CD4-positive, alpha-beta memory T cell (primary cell): ENCODE measurements at regions of chr3 and their contacts with region 1.

Region 1: DNA sequence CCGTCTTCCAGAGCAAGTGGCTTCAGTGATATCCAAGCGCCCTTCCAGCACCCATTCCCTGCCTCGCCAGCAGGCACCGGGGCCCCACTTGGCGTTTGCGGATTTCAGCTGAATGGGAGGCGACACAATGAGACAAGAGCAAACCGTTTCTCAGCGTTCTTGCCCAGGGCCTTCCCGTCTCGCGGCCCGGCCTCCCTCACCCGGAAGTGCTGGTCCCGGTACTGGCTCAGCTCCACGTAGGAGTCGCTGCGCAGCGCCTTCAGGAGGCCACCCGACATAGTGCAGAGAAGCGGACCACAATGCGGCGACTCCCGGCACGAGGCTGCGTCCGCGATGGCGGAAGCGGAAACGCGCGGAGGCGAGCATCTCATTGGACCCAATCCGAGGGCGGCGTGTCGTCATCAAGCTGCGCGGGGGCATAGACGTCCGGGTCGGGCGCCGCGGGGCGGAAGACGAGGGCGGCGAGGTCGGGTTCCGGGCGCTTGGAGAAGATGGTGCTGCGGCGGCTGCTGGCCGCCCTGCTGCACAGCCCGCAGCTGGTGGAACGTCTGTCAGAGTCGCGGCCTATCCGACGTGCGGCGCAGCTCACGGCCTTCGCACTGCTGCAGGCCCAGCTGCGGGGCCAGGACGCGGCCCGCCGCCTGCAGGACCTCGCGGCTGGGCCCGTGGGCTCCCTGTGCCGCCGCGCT is at the start of gene NCBP2:
- DNase-seq: peak; percentile 99
- H3K4me3 ChIP-seq: peak within 1 kb of the TSS; percentile 98 to 99
- H3K4me3 Mint-ChIP-seq: peak within 1 kb of the TSS; percentile 94 to 97 (median 96)
- H3K27ac ChIP-seq: peak within 1 kb of the TSS; percentile 93
- H3K27ac Mint-ChIP-seq: peak within 1 kb of the TSS; percentile 97 to 99 (median 98)
- H3K4me1 ChIP-seq: peaks cover 29% of the 10 kb centered on the region
- H3K4me1 Mint-ChIP-seq: peaks cover 15 to 61% (median 44%) of the 10 kb centered on the region in 4 donors
- H3K27me3 ChIP-seq: no peaks in the 10 kb centered on the region
- H3K27me3 Mint-ChIP-seq: no peaks in the 10 kb centered on the region
- total RNA-seq, gene NCBP2: 71.4 to 73.7 TPM

Region 2: GRCh38 chr3:196432137-196432879 is 510.1 kb before region 1 on chr3 and contains the start of gene UBXN7:
- CTCF ChIA-PET with region 1: no interaction called
- POLR2A ChIA-PET with region 1: no interaction called
- intact Hi-C with region 1: loop called (anchors 1 kb)
- DNase-seq: peak; percentile 92 to 96 (median 95)
- H3K4me3 ChIP-seq: peak within 1 kb of the TSS; percentile 64 to 95
- H3K4me3 Mint-ChIP-seq: peak within 1 kb of the TSS; percentile 70 to 97 (median 85)
- H3K27ac ChIP-seq: peak within 1 kb of the TSS; percentile 81
- H3K27ac Mint-ChIP-seq: peak within 1 kb of the TSS; percentile 80 to 97 (median 96)
- H3K4me1 ChIP-seq: peaks cover 22% of the 10 kb centered on the region
- H3K4me1 Mint-ChIP-seq: peaks cover 8 to 35% (median 15%) of the 10 kb centered on the region in 4 donors
- H3K27me3 ChIP-seq: no peaks in the 10 kb centered on the region
- H3K27me3 Mint-ChIP-seq: no peaks in the 10 kb centered on the region
- total RNA-seq, gene UBXN7: 72.6 to 90.8 TPM

Region 3: GRCh38 chr3:196739671-196740480 is 202.5 kb before region 1 on chr3 and contains the start of gene PAK2:
- CTCF ChIA-PET with region 1: no interaction called
- POLR2A ChIA-PET with region 1: interaction called, 14 read pairs
- intact Hi-C with region 1: loop called (anchors 1 kb)
- DNase-seq: peak; percentile 85 to 90 (median 87)
- H3K4me3 ChIP-seq: peak within 1 kb of the TSS; percentile 70 to 95
- H3K4me3 Mint-ChIP-seq: peak within 1 kb of the TSS; percentile 96 to 100 (median 100)
- H3K27ac ChIP-seq: peak within 1 kb of the TSS; percentile 99
- H3K27ac Mint-ChIP-seq: peak within 1 kb of the TSS; percentile 97 to 100 (median 99)
- H3K4me1 ChIP-seq: peaks cover 42% of the 10 kb centered on the region
- H3K4me1 Mint-ChIP-seq: peaks cover 21 to 45% (median 28%) of the 10 kb centered on the region in 4 donors
- H3K27me3 ChIP-seq: no peaks in the 10 kb centered on the region
- H3K27me3 Mint-ChIP-seq: no peaks in the 10 kb centered on the region
- total RNA-seq, gene PAK2: 80.4 to 97.4 TPM

Region 4: DNA sequence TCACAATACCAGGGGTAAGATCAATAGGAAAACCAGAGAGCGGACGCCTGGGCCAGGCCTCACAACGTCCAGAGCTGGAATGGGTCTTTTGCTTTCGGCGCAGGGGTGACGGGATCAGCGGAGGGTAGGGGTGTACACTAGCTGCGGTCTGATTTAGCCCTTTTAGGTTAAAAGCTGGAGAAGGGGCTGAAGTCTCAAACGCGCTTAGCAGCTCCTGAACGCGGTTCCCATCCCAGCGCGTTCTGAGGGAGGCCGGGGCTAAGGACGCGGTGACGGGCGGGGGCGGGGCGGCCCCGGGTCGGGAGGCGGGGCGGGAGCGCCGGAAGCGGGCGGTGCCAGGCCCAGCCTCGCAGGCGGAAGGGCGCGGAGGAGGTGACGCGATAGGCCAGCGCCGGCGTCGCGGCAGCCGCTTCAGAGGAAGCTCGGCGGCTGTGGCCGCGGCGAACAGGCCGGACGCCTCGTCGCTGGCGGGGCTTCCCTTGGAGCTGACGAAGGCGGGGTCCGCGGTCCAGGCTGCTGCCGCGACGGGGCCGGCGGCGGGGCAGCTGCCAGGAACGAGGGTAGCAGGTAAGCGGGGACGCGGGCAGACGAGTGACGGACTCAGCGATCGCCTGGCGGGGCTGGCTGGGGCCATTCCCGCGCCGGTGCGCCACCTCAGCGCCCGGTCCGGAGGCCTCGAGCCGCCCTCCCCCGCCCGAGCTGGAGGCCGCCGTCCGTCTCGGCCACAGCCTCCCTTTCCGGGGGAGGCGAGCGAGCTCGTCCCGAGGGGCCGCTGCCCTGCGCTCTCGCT is 74.7 kb before region 1 on chr3 and contains the start of gene SENP5:
- CTCF ChIA-PET with region 1: interaction called, 7 read pairs
- POLR2A ChIA-PET with region 1: interaction called, 99 read pairs
- intact Hi-C with region 1: loop called (anchors 1 kb)
- DNase-seq: peak; percentile 84 to 88 (median 87)
- H3K4me3 ChIP-seq: peak within 1 kb of the TSS; percentile 48 to 73
- H3K4me3 Mint-ChIP-seq: peak within 1 kb of the TSS; percentile 95 to 98 (median 96)
- H3K27ac ChIP-seq: peak within 1 kb of the TSS; percentile 85
- H3K27ac Mint-ChIP-seq: peak within 1 kb of the TSS; percentile 90 to 98 (median 98)
- H3K4me1 ChIP-seq: peaks cover 27% of the 10 kb centered on the region
- H3K4me1 Mint-ChIP-seq: peaks cover 18 to 38% (median 29%) of the 10 kb centered on the region in 4 donors
- H3K27me3 ChIP-seq: no peaks in the 10 kb centered on the region
- H3K27me3 Mint-ChIP-seq: no peaks in the 10 kb centered on the region
- total RNA-seq, gene SENP5: 44.3 to 45.5 TPM

Region 5: DNA sequence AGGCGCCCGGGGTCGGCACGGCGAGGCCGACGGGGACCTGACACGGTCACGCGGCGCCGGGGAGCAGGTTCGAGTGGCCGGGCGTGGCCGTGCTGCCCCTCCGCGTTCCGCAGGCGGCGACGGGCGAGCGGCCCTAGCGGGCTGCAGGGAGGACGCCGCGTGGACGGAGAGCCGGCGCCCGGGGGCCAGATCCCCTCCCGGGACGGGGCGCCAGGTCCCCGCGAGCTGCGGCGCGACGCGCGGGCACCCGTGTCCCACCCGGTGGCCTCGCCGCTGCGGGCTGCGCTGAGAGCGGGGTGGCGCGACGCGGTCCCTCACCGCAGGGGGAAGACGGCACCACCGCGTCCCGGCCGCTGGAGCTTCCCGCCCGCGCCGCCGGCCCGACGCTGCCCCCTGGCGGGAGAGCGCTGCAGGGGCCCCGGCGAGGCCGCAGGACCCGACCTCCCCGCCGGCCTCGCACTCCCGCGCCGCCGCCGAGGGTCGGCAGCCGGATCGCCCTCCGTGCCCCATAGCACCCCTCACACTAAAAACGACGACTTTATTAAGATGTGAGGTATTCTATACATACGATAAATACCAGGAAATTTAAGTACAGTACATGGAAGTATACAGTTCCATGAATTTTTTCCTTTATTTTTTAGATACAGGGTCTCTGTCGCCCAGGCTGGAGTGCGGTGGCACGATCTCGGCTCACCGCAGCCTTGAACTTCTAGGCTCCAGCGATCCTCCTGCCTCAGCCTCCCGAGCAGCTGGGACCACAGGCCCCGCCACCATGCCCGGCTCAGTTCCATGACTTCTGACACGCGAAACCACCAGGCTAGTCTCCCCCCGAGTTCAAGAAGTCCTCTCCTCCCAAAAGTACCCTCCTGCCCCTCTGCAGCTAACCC is 27.5 kb after region 1 on chr3:
- CTCF ChIA-PET with region 1: no interaction called
- POLR2A ChIA-PET with region 1: interaction called, 12 read pairs
- intact Hi-C with region 1: loop called (anchors 1 kb)
- DNase-seq: peak; percentile 53 to 69 (median 68)
- H3K4me3 ChIP-seq: peak overlapping the region in 1 of 2 donors; percentile 64
- H3K4me3 Mint-ChIP-seq: peak overlapping the region; percentile 67 to 86 (median 80)
- H3K27ac ChIP-seq: peak overlapping the region; percentile 4
- H3K27ac Mint-ChIP-seq: peak overlapping the region in 3 of 7 donors; percentile 17 to 71 (median 41)
- H3K4me1 ChIP-seq: peaks cover 8% of the 10 kb centered on the region
- H3K4me1 Mint-ChIP-seq: peaks cover 0 to 16% (median 4%) of the 10 kb centered on the region in 4 donors
- H3K27me3 ChIP-seq: no peaks in the 10 kb centered on the region
- H3K27me3 Mint-ChIP-seq: peaks cover 0 to 1% of the 10 kb centered on the region in 2 donors